T-cell (primary cell): ENCODE measurements at regions of chr3 and their contacts with region 1.

Region 1: DNA sequence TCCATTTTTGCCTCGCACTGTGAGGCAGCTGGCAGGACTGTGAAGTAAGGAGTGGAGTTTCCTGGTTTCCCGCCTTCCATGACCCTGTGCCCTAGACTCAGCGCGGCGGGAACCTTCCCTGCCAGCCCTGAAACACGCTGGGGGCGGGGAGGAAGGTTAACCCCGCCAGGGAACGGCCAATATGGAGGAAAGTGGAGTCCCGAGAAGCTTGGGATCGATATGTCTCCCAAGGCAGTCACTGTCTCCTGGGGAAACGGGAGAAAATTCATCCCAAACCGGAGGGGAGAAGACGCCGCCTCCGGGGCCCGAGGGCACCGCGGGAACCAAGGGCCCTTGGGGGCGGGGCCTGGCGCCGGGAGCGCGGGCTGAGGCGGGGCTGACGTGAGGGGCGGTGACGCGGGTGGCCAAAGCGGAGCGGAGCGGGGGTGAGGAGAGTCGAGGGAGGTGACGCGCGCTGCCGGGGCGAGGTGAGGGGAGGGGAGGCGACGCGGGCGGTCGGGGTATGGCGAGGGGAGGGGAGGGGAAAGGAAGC is at the start of gene HMCES:
- DNase-seq: peak; percentile 90 to 97 (median 95)
- ATAC-seq: peak; percentile 92 to 96 (median 92)
- H3K4me3 ChIP-seq: peak within 1 kb of the TSS; percentile 84 to 94
- H3K4me3 Mint-ChIP-seq: peak within 1 kb of the TSS; percentile 83 to 96 (median 94)
- H3K27ac ChIP-seq: peak within 1 kb of the TSS; percentile 95
- H3K27ac Mint-ChIP-seq: peak within 1 kb of the TSS; percentile 95 to 96
- H3K4me1 ChIP-seq: peaks cover 6 to 38% of the 10 kb centered on the region in 2 experiments
- H3K4me1 Mint-ChIP-seq: peaks cover 39 to 56% (median 44%) of the 10 kb centered on the region in 3 donors
- H3K27me3 ChIP-seq: no peaks in the 10 kb centered on the region
- H3K27me3 Mint-ChIP-seq: no peaks in the 10 kb centered on the region
- total RNA-seq, gene HMCES: 55.2 to 60.7 (median 57.6) TPM

Region 2: GRCh38 chr3:129045675-129046036 is 232.8 kb before region 1 on chr3:
- CTCF ChIA-PET with region 1: no interaction called
- POLR2A ChIA-PET with region 1: no interaction called
- DNase-seq: peak in 11 of 35 experiments; percentile 8 to 53 (median 35)
- ATAC-seq: peak; percentile 76 to 89 (median 80)
- H3K4me3 ChIP-seq: peak overlapping the region; percentile 31 to 42
- H3K4me3 Mint-ChIP-seq: peak overlapping the region in 2 of 3 donors; percentile 59 to 63
- H3K27ac ChIP-seq: no peak overlapping the region
- H3K27ac Mint-ChIP-seq: no peak overlapping the region
- H3K4me1 ChIP-seq: peaks cover 0 to 8% of the 10 kb centered on the region in 2 experiments
- H3K4me1 Mint-ChIP-seq: peaks cover 0 to 18% (median 5%) of the 10 kb centered on the region in 3 donors
- H3K27me3 ChIP-seq: peaks cover 0 to 27% of the 10 kb centered on the region in 2 experiments
- H3K27me3 Mint-ChIP-seq: peaks cover 10 to 18% of the 10 kb centered on the region in 2 donors

Region 3: GRCh38 chr3:129087138-129087702 is 191.3 kb before region 1 on chr3:
- CTCF ChIA-PET with region 1: no interaction called
- POLR2A ChIA-PET with region 1: no interaction called
- DNase-seq: no peak
- ATAC-seq: no peak
- H3K4me3 ChIP-seq: no peak overlapping the region
- H3K4me3 Mint-ChIP-seq: no peak overlapping the region
- H3K27ac ChIP-seq: no peak overlapping the region
- H3K27ac Mint-ChIP-seq: peak overlapping the region; percentile 52 to 77
- H3K4me1 ChIP-seq: peaks cover 0 to 9% of the 10 kb centered on the region in 2 experiments
- H3K4me1 Mint-ChIP-seq: peaks cover 4 to 20% (median 6%) of the 10 kb centered on the region in 3 donors
- H3K27me3 ChIP-seq: no peaks in the 10 kb centered on the region
- H3K27me3 Mint-ChIP-seq: no peaks in the 10 kb centered on the region

Region 4: GRCh38 chr3:129238945-129239706 is 39.4 kb before region 1 on chr3:
- CTCF ChIA-PET with region 1: no interaction called
- POLR2A ChIA-PET with region 1: no interaction called
- DNase-seq: no peak
- ATAC-seq: peak; percentile 42 to 68 (median 50)
- H3K4me3 ChIP-seq: no peak overlapping the region
- H3K4me3 Mint-ChIP-seq: peak overlapping the region in 2 of 3 donors; percentile 7 to 61
- H3K27ac ChIP-seq: no peak overlapping the region
- H3K27ac Mint-ChIP-seq: peak overlapping the region; percentile 55 to 77
- H3K4me1 ChIP-seq: peaks cover 2 to 16% of the 10 kb centered on the region in 2 experiments
- H3K4me1 Mint-ChIP-seq: peaks cover 5 to 23% (median 20%) of the 10 kb centered on the region in 3 donors
- H3K27me3 ChIP-seq: peaks cover 0 to 3% of the 10 kb centered on the region in 2 experiments
- H3K27me3 Mint-ChIP-seq: no peaks in the 10 kb centered on the region

Region 5: GRCh38 chr3:129316131-129317013 is 37.9 kb after region 1 on chr3:
- CTCF ChIA-PET with region 1: interaction called in 1 of 2 experiments, 12 read pairs
- POLR2A ChIA-PET with region 1: interaction called, 15 to 21 read pairs
- DNase-seq: peak; percentile 67 to 92 (median 84)
- ATAC-seq: peak; percentile 58 to 64 (median 62)
- H3K4me3 ChIP-seq: peak overlapping the region; percentile 71 to 96
- H3K4me3 Mint-ChIP-seq: peak overlapping the region; percentile 83 to 93 (median 89)
- H3K27ac ChIP-seq: no peak overlapping the region
- H3K27ac Mint-ChIP-seq: peak overlapping the region; percentile 79 to 84
- H3K4me1 ChIP-seq: peaks cover 10 to 36% of the 10 kb centered on the region in 2 experiments
- H3K4me1 Mint-ChIP-seq: peaks cover 22 to 28% (median 23%) of the 10 kb centered on the region in 3 donors
- H3K27me3 ChIP-seq: no peaks in the 10 kb centered on the region
- H3K27me3 Mint-ChIP-seq: no peaks in the 10 kb centered on the region